CD14-positive monocyte (primary cell): ENCODE measurements at regions of chr2 and their contacts with region 1.

Region 1: GRCh38 chr2:74198461-74199274 is at the start of gene MTHFD2:
- DNase-seq: peak; percentile 96 to 98 (median 96)
- H3K4me3 ChIP-seq: peak within 1 kb of the TSS; percentile 58 to 78 (median 71)
- H3K4me3 Mint-ChIP-seq: peak within 1 kb of the TSS; percentile 92 to 100
- H3K27ac ChIP-seq: peak within 1 kb of the TSS; percentile 86 to 94
- H3K27ac Mint-ChIP-seq: peak within 1 kb of the TSS; percentile 96 to 98 (median 97)
- H3K4me1 ChIP-seq: peaks cover 25 to 38% of the 10 kb centered on the region in 2 donors
- H3K4me1 Mint-ChIP-seq: peaks cover 36% of the 10 kb centered on the region
- H3K27me3 ChIP-seq: no peaks in the 10 kb centered on the region
- H3K27me3 Mint-ChIP-seq: peaks cover 0 to 5% (median 1%) of the 10 kb centered on the region in 3 donors
- CTCF ChIP-seq: peak; percentile 92
- polyA plus RNA-seq, gene MTHFD2: 24.1 to 39.4 (median 38.5) TPM

Region 2: GRCh38 chr2:72887754-72888437 is 1310.8 kb before region 1 on chr2:
- intact Hi-C with region 1: no loop called
- DNase-seq: peak; percentile 29 to 65 (median 43)
- H3K4me3 ChIP-seq: peak overlapping the region; percentile 44 to 88 (median 53)
- H3K4me3 Mint-ChIP-seq: peak overlapping the region; percentile 79 to 89
- H3K27ac ChIP-seq: no peak overlapping the region
- H3K27ac Mint-ChIP-seq: peak overlapping the region in 3 of 7 donors; percentile 33 to 52 (median 33)
- H3K4me1 ChIP-seq: peaks cover 27 to 41% of the 10 kb centered on the region in 2 donors
- H3K4me1 Mint-ChIP-seq: peaks cover 37% of the 10 kb centered on the region
- H3K27me3 ChIP-seq: peaks cover 23 to 45% of the 10 kb centered on the region in 2 donors
- H3K27me3 Mint-ChIP-seq: peaks cover 39 to 52% (median 40%) of the 10 kb centered on the region in 3 donors
- CTCF ChIP-seq: peak; percentile 96

Region 3: DNA sequence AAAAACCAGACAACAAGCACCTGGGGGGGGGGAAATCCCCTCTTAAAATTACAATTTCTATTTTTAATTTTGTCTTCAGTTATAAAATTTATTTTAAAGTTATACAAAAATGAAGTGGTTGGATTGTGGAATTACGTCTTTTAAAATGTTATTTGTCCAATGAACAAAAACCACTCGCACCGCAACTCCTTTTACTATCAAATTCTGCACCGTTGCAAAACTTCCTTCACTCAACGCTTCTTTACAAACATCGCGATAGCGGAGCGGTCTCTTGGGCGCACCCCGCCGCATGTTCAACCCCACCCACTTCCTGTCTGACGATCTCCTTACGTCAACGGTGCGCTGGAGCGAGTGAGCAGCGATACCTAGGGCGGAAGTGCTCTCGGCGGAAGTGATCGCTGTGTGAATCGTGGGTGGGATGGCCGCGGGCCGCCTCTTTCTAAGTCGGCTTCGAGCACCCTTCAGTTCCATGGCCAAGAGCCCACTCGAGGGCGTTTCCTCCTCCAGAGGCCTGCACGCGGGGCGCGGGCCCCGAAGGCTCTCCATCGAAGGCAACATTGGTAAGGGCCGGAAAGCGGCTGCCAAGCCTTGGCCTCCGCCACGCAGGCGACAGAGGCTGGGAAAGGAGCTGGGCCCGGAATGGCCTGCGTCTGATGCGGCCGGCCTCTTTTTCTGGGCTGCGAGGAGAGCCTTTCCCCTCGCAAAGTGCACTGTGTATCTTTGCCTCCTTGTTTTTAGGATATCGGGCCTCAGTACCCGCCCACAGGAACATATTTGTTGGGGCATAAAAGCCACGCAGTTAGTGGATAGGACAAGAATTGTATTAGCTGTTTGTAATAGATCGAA is 272.0 kb before region 1 on chr2 and contains the start of gene DGUOK:
- intact Hi-C with region 1: loop called in 1 of 2 experiments (anchors 10 kb)
- DNase-seq: peak; percentile 99 to 100 (median 99)
- H3K4me3 ChIP-seq: peak within 1 kb of the TSS; percentile 60 to 76 (median 74)
- H3K4me3 Mint-ChIP-seq: peak within 1 kb of the TSS; percentile 80 to 92
- H3K27ac ChIP-seq: peak within 1 kb of the TSS; percentile 98
- H3K27ac Mint-ChIP-seq: peak within 1 kb of the TSS; percentile 97 to 99 (median 98)
- H3K4me1 ChIP-seq: peaks cover 53 to 72% of the 10 kb centered on the region in 2 donors
- H3K4me1 Mint-ChIP-seq: peaks cover 59% of the 10 kb centered on the region
- H3K27me3 ChIP-seq: no peaks in the 10 kb centered on the region
- H3K27me3 Mint-ChIP-seq: peaks cover 0 to 2% (median 0%) of the 10 kb centered on the region in 3 donors
- CTCF ChIP-seq: no peak
- polyA plus RNA-seq, gene DGUOK: 62.9 to 129 (median 123) TPM

Region 4: DNA sequence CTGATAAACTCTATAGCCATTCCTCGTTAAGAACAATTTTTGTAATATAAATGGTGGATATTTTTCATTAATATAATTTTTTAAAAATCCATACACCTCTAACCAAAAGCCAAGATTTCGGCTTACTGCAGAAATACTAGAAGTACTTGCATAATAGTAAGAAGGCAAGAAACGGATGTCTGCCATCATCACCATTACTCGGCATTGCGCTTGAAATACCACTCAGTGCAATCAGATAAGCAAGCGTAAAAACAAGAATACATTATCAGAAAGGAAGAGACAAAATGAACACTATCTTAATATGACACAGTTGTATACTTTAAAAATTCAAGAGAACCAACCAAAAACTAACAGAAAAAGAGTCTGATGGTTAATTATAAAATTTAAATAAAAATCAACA is 35.7 kb before region 1 on chr2:
- intact Hi-C with region 1: loop called in 1 of 2 experiments (anchors 5 kb)
- DNase-seq: no peak
- H3K4me3 ChIP-seq: no peak overlapping the region
- H3K4me3 Mint-ChIP-seq: no peak overlapping the region
- H3K27ac ChIP-seq: no peak overlapping the region
- H3K27ac Mint-ChIP-seq: peak overlapping the region in 1 of 7 donors; percentile 19
- H3K4me1 ChIP-seq: no peaks in the 10 kb centered on the region
- H3K4me1 Mint-ChIP-seq: no peaks in the 10 kb centered on the region
- H3K27me3 ChIP-seq: no peaks in the 10 kb centered on the region
- H3K27me3 Mint-ChIP-seq: no peaks in the 10 kb centered on the region
- CTCF ChIP-seq: no peak

Region 5: DNA sequence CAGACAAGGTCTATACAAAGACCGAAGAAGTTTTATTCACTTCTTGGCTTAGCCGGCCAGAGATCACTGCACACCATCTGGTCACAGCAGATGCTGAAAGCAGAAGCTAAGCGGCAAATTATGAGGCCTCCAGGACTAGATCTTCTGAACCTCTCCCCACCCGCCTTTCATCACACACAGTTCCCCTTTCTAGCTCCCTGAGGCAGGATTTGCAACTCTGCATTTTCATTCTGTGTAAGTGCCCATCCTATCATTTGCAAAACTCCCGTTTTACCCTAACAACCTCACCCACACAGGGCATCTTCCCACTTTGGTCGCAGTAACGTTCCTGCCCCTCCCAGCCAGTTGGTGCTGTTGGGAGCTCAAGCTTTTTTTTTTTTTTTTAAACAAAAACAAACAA is 16.9 kb before region 1 on chr2:
- intact Hi-C with region 1: loop called in 1 of 2 experiments (anchors 2 kb)
- DNase-seq: peak; percentile 89 to 94 (median 93)
- H3K4me3 ChIP-seq: peak overlapping the region in 1 of 3 experiments; percentile 54
- H3K4me3 Mint-ChIP-seq: peak overlapping the region; percentile 49 to 67
- H3K27ac ChIP-seq: peak overlapping the region; percentile 81 to 84
- H3K27ac Mint-ChIP-seq: peak overlapping the region; percentile 90 to 96 (median 93)
- H3K4me1 ChIP-seq: peaks cover 76 to 85% of the 10 kb centered on the region in 2 donors
- H3K4me1 Mint-ChIP-seq: peaks cover 56% of the 10 kb centered on the region
- H3K27me3 ChIP-seq: no peaks in the 10 kb centered on the region
- H3K27me3 Mint-ChIP-seq: peaks cover 0 to 5% (median 0%) of the 10 kb centered on the region in 3 donors
- CTCF ChIP-seq: no peak

Region 6: DNA sequence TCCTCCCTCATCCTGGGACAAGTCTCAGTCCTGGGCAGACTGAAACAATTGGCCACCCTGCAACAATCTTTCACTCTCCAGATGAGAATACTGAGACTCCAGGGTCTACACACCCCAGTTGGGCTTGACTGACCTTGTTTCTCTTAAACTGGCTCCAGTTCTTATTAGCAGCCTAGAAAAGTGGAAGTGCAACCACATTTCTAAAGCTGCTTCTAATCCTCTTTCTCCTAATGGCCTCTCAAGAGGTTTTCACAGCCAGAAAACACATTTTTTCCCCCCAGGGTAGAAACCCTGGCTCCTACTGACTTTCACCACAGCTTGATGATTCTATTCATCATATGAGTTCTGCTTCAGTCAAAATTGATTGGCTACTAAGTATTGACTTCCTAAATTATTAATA is 98.7 kb after region 1 on chr2:
- intact Hi-C with region 1: no loop called
- DNase-seq: no peak
- H3K4me3 ChIP-seq: no peak overlapping the region
- H3K4me3 Mint-ChIP-seq: no peak overlapping the region
- H3K27ac ChIP-seq: no peak overlapping the region
- H3K27ac Mint-ChIP-seq: no peak overlapping the region
- H3K4me1 ChIP-seq: no peaks in the 10 kb centered on the region
- H3K4me1 Mint-ChIP-seq: peaks cover 7% of the 10 kb centered on the region
- H3K27me3 ChIP-seq: no peaks in the 10 kb centered on the region
- H3K27me3 Mint-ChIP-seq: peaks cover 0 to 10% (median 0%) of the 10 kb centered on the region in 3 donors
- CTCF ChIP-seq: no peak